Activated naive CD4-positive, alpha-beta T cell treated with anti-CD3 and anti-CD28 coated beads for 36 hours (primary cell): ENCODE measurements at regions of chr1 and their contacts with region 1.

Region 1: GRCh38 chr1:157992031-157992832 is 1.2 kb upstream of the KIRREL1 start:
- DNase-seq: peak; percentile 66
- H3K4me3 Mint-ChIP-seq: no peak overlapping the region
- H3K27ac Mint-ChIP-seq: no peak overlapping the region
- H3K4me1 Mint-ChIP-seq: peaks cover 5% of the 10 kb centered on the region
- H3K27me3 Mint-ChIP-seq: peaks cover 48% of the 10 kb centered on the region

Region 2: GRCh38 chr1:157944663-157945280 is 47.5 kb before region 1 on chr1:
- CTCF ChIA-PET with region 1: no interaction called
- intact Hi-C with region 1: no loop called
- DNase-seq: no peak
- H3K4me3 Mint-ChIP-seq: no peak overlapping the region
- H3K27ac Mint-ChIP-seq: no peak overlapping the region
- H3K4me1 Mint-ChIP-seq: no peaks in the 10 kb centered on the region
- H3K27me3 Mint-ChIP-seq: peaks cover 15% of the 10 kb centered on the region

Region 3: GRCh38 chr1:157969697-157970485 is 22.3 kb before region 1 on chr1:
- CTCF ChIA-PET with region 1: interaction called, 15 read pairs
- intact Hi-C with region 1: no loop called
- DNase-seq: peak; percentile 14
- H3K4me3 Mint-ChIP-seq: no peak overlapping the region
- H3K27ac Mint-ChIP-seq: no peak overlapping the region
- H3K4me1 Mint-ChIP-seq: no peaks in the 10 kb centered on the region
- H3K27me3 Mint-ChIP-seq: peaks cover 16% of the 10 kb centered on the region

Region 4: GRCh38 chr1:158035976-158036583 is 43.8 kb after region 1 on chr1:
- CTCF ChIA-PET with region 1: interaction called, 54 read pairs
- intact Hi-C with region 1: loop called (anchors 1 kb)
- DNase-seq: peak; percentile 31
- H3K4me3 Mint-ChIP-seq: no peak overlapping the region
- H3K27ac Mint-ChIP-seq: no peak overlapping the region
- H3K4me1 Mint-ChIP-seq: no peaks in the 10 kb centered on the region
- H3K27me3 Mint-ChIP-seq: peaks cover 2% of the 10 kb centered on the region

Region 5: GRCh38 chr1:158087320-158087927 is 95.2 kb after region 1 on chr1:
- CTCF ChIA-PET with region 1: interaction called, 11 read pairs
- intact Hi-C with region 1: loop called (anchors 1 kb)
- DNase-seq: peak; percentile 54
- H3K4me3 Mint-ChIP-seq: no peak overlapping the region
- H3K27ac Mint-ChIP-seq: no peak overlapping the region
- H3K4me1 Mint-ChIP-seq: no peaks in the 10 kb centered on the region
- H3K27me3 Mint-ChIP-seq: peaks cover 2% of the 10 kb centered on the region

Region 6: DNA sequence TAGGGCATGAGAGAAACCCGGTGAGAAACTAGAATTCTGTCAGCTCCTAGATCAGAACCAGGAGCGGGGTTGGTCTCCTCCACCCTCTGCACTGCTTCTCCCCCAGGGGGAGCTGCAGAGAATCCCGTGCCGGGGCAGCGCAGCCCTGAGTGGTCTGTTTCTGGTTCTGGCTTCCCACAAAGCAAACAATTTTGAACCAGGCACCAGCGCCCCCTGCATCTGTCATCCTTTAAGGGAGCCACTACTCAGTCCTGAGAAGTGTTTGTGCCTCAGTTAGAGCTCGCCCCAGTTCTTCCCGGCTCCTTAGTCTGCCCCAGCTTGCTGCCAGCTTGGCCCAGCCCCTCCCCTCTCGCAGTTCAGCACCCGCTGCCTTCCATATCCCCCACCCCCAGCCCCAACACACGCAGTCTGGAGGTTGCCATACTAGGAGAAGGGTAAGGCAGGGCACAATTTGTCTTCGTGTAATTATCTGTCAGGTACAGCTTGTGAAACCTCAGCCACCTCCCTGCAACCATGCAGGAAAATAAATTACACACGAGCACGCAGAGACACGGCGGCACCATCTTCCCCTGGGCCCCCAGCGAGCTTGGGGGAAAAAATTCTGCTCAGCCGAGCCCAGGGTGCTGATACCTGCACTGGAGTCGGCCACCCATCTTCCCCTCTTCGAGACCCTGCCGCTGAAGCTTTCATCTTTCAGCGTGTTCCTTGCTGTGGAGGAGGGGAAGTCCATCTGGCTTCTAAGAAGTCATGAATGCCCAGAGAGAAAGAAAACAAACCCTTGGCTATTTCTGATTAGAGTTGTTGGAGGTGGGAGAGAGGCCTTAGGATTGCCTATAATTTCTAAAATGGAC is 125.8 kb after region 1 on chr1:
- CTCF ChIA-PET with region 1: interaction called, 128 read pairs
- intact Hi-C with region 1: loop called (anchors 1 kb)
- DNase-seq: peak; percentile 40
- H3K4me3 Mint-ChIP-seq: peak overlapping the region; percentile 16
- H3K27ac Mint-ChIP-seq: no peak overlapping the region
- H3K4me1 Mint-ChIP-seq: peaks cover 10% of the 10 kb centered on the region
- H3K27me3 Mint-ChIP-seq: peaks cover 51% of the 10 kb centered on the region

Region 7: GRCh38 chr1:158248118-158248517 is 255.9 kb after region 1 on chr1:
- CTCF ChIA-PET with region 1: no interaction called
- intact Hi-C with region 1: no loop called
- DNase-seq: peak; percentile 55
- H3K4me3 Mint-ChIP-seq: no peak overlapping the region
- H3K27ac Mint-ChIP-seq: no peak overlapping the region
- H3K4me1 Mint-ChIP-seq: peaks cover 19% of the 10 kb centered on the region
- H3K27me3 Mint-ChIP-seq: peaks cover 45% of the 10 kb centered on the region

Region 8: GRCh38 chr1:158998781-158999161 is 1006.5 kb after region 1 on chr1:
- CTCF ChIA-PET with region 1: no interaction called
- intact Hi-C with region 1: loop called (anchors 2 kb)
- DNase-seq: peak; percentile 60
- H3K4me3 Mint-ChIP-seq: no peak overlapping the region
- H3K27ac Mint-ChIP-seq: no peak overlapping the region
- H3K4me1 Mint-ChIP-seq: peaks cover 30% of the 10 kb centered on the region
- H3K27me3 Mint-ChIP-seq: no peaks in the 10 kb centered on the region